Activated B cell treated with CpG ODN at 0.5 μM for 24 hours (primary cell): ENCODE measurements at regions of chr10 and their contacts with region 1.

Region 1: GRCh38 chr10:102752934-102753664 is 9.4 kb downstream of the WBP1L start:
- DNase-seq: no peak
- ATAC-seq: peak; percentile 67
- H3K4me3 Mint-ChIP-seq: no peak overlapping the region
- H3K27ac Mint-ChIP-seq: no peak overlapping the region
- H3K4me1 Mint-ChIP-seq: peaks cover 49% of the 10 kb centered on the region
- H3K27me3 Mint-ChIP-seq: no peaks in the 10 kb centered on the region
- CTCF ChIP-seq: no peak

Region 2: DNA sequence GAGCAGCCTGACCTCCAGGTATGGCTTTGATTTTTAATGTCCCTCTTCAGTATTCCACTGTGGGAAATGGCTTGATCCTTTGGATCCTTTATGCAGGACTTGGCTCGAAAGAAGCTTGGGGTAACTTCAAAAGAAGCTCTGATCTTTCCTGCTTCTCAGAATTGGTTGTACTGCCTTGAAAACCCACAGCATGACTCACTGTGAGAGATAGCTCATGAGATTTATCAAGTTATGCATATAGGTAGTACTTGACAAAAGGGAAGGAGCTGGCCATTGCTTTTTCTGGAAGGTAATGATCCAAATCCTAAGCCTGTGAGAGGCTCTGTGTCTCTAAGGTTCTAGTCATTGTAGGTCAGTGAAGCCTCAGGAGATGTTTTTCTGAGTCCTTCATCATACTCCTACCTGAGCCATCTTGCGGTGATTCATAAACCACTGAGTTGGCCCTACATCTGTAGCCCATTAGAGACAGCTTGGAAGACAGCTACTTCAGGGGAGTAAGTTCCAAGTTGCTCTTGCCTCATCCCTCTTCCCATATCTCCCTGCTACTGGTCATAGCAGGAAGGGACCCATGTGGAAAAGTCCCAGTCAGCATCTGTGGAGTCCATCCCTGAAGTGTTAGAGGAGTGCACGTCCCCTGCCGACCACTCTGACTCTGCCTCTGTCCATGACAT is 394.3 kb before region 1 on chr10:
- CTCF ChIA-PET with region 1: no interaction called
- POLR2A ChIA-PET with region 1: no interaction called
- intact Hi-C with region 1: no loop called
- DNase-seq: no peak
- ATAC-seq: no peak
- H3K4me3 Mint-ChIP-seq: no peak overlapping the region
- H3K27ac Mint-ChIP-seq: no peak overlapping the region
- H3K4me1 Mint-ChIP-seq: no peaks in the 10 kb centered on the region
- H3K27me3 Mint-ChIP-seq: no peaks in the 10 kb centered on the region
- CTCF ChIP-seq: no peak

Region 3: GRCh38 chr10:102815790-102816549 is 62.9 kb after region 1 on chr10:
- CTCF ChIA-PET with region 1: no interaction called
- POLR2A ChIA-PET with region 1: interaction called, 3 read pairs
- intact Hi-C with region 1: loop called (anchors 5 kb)
- DNase-seq: no peak
- ATAC-seq: no peak
- H3K4me3 Mint-ChIP-seq: no peak overlapping the region
- H3K27ac Mint-ChIP-seq: peak overlapping the region; percentile 61
- H3K4me1 Mint-ChIP-seq: peaks cover 50% of the 10 kb centered on the region
- H3K27me3 Mint-ChIP-seq: no peaks in the 10 kb centered on the region
- CTCF ChIP-seq: no peak